GM12878 (cell line): ENCODE measurements at regions of chr12 and their contacts with region 1.

Region 1: GRCh38 chr12:104381731-104382480 is 74.8 kb upstream of the CHST11 start:
- DNase-seq: peak; percentile 44
- ATAC-seq: peak; percentile 98
- H3K4me3 ChIP-seq: no peak overlapping the region
- H3K27ac ChIP-seq: no peak overlapping the region
- H3K4me1 ChIP-seq: no peaks in the 10 kb centered on the region
- H3K27me3 ChIP-seq: no peaks in the 10 kb centered on the region
- CTCF ChIP-seq: peak; percentile 91 to 92 (median 91); a peak in 5 of 6 replicates
- EP300 ChIP-seq: no peak
- POLR2A ChIP-seq: no peak
- RAD21 ChIP-seq: peak; percentile 100

Region 2: GRCh38 chr12:102903337-102904007 is 1478.4 kb before region 1 on chr12:
- CTCF ChIA-PET with region 1: no interaction called
- POLR2A ChIA-PET with region 1: no interaction called
- RAD21 ChIA-PET with region 1: no interaction called
- SMC1A ChIA-PET with region 1: no interaction called
- in situ Hi-C with region 1: no loop called
- intact Hi-C with region 1: no loop called
- DNase-seq: no peak
- ATAC-seq: peak; percentile 53
- H3K4me3 ChIP-seq: no peak overlapping the region
- H3K27ac ChIP-seq: no peak overlapping the region
- H3K4me1 ChIP-seq: no peaks in the 10 kb centered on the region
- H3K27me3 ChIP-seq: no peaks in the 10 kb centered on the region
- CTCF ChIP-seq: no peak
- EP300 ChIP-seq: no peak
- POLR2A ChIP-seq: no peak
- RAD21 ChIP-seq: no peak

Region 3: GRCh38 chr12:104243551-104243950 is 138.4 kb before region 1 on chr12:
- CTCF ChIA-PET with region 1: no interaction called
- POLR2A ChIA-PET with region 1: no interaction called
- RAD21 ChIA-PET with region 1: no interaction called
- SMC1A ChIA-PET with region 1: no interaction called
- in situ Hi-C with region 1: no loop called
- intact Hi-C with region 1: no loop called
- DNase-seq: no peak
- ATAC-seq: no peak
- H3K4me3 ChIP-seq: no peak overlapping the region
- H3K27ac ChIP-seq: no peak overlapping the region
- H3K4me1 ChIP-seq: no peaks in the 10 kb centered on the region
- H3K27me3 ChIP-seq: no peaks in the 10 kb centered on the region
- CTCF ChIP-seq: no peak
- EP300 ChIP-seq: no peak
- POLR2A ChIP-seq: no peak
- RAD21 ChIP-seq: no peak

Region 4: GRCh38 chr12:104347374-104348075 is 34.4 kb before region 1 on chr12:
- CTCF ChIA-PET with region 1: no interaction called
- POLR2A ChIA-PET with region 1: no interaction called
- RAD21 ChIA-PET with region 1: no interaction called
- SMC1A ChIA-PET with region 1: no interaction called
- in situ Hi-C with region 1: no loop called
- intact Hi-C with region 1: no loop called
- DNase-seq: no peak
- ATAC-seq: no peak
- H3K4me3 ChIP-seq: no peak overlapping the region
- H3K27ac ChIP-seq: no peak overlapping the region
- H3K4me1 ChIP-seq: peaks cover 9% of the 10 kb centered on the region
- H3K27me3 ChIP-seq: no peaks in the 10 kb centered on the region
- CTCF ChIP-seq: no peak
- EP300 ChIP-seq: no peak
- POLR2A ChIP-seq: no peak
- RAD21 ChIP-seq: no peak

Region 5: GRCh38 chr12:104456417-104456949 is 74.6 kb after region 1 on chr12 and contains the start of gene CHST11:
- CTCF ChIA-PET with region 1: interaction called, 13 read pairs
- POLR2A ChIA-PET with region 1: no interaction called
- RAD21 ChIA-PET with region 1: interaction called, 32 read pairs
- SMC1A ChIA-PET with region 1: interaction called, 19 read pairs
- in situ Hi-C with region 1: no loop called
- intact Hi-C with region 1: loop called (anchors 2 kb)
- DNase-seq: no peak
- ATAC-seq: peak; percentile 76
- H3K4me3 ChIP-seq: peak within 1 kb of the TSS; percentile 100
- H3K27ac ChIP-seq: peak within 1 kb of the TSS; percentile 95
- H3K4me1 ChIP-seq: peaks cover 7% of the 10 kb centered on the region; the same call in 1 of the 2 replicates
- H3K27me3 ChIP-seq: no peaks in the 10 kb centered on the region
- CTCF ChIP-seq: peak; percentile 11 to 21 (median 15); a peak in 2 of 6 replicates
- EP300 ChIP-seq: peak; percentile 38 to 57; a peak in 1 of 4 replicates
- POLR2A ChIP-seq: no peak
- RAD21 ChIP-seq: peak; percentile 20; the same call in 1 of the 2 replicates
- polyA plus RNA-seq, gene CHST11: 1.9 to 2.5 TPM

Region 6: DNA sequence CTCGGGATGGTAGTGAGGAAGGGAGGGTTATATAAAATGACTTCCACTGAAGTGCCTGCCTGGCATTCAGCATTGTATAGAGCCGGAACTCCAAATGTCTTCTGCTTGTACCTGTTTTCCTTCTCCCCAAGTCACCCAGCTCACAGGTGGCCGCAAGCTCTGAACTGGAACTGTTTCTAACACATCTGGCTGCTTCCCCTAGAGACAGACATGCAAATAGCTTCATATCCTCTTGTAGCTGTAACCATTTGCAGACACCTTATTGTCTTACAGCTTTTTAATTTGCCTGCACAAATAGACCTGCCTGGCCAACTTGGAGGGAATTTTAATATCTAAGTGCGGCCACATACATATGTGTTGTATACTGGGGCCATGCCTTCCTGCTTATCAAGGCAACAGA is 200.8 kb after region 1 on chr12:
- CTCF ChIA-PET with region 1: interaction called, 7 read pairs
- POLR2A ChIA-PET with region 1: no interaction called
- RAD21 ChIA-PET with region 1: interaction called, 14 read pairs
- SMC1A ChIA-PET with region 1: interaction called, 10 read pairs
- in situ Hi-C with region 1: no loop called
- intact Hi-C with region 1: loop called (anchors 5 kb)
- DNase-seq: peak; percentile 76
- ATAC-seq: peak; percentile 90
- H3K4me3 ChIP-seq: peak overlapping the region; percentile 37; the same call in 1 of the 2 replicates
- H3K27ac ChIP-seq: peak overlapping the region; percentile 47
- H3K4me1 ChIP-seq: peaks cover 69% of the 10 kb centered on the region
- H3K27me3 ChIP-seq: no peaks in the 10 kb centered on the region
- CTCF ChIP-seq: no peak
- EP300 ChIP-seq: peak; percentile 35 to 79; a peak in 3 of 4 replicates
- POLR2A ChIP-seq: no peak
- RAD21 ChIP-seq: no peak

Region 7: GRCh38 chr12:104695453-104696148 is 313.7 kb after region 1 on chr12:
- CTCF ChIA-PET with region 1: interaction called, 7 read pairs
- POLR2A ChIA-PET with region 1: no interaction called
- RAD21 ChIA-PET with region 1: interaction called, 9 read pairs
- SMC1A ChIA-PET with region 1: interaction called, 12 read pairs
- in situ Hi-C with region 1: no loop called
- intact Hi-C with region 1: no loop called
- DNase-seq: peak; percentile 73
- ATAC-seq: peak; percentile 75
- H3K4me3 ChIP-seq: no peak overlapping the region
- H3K27ac ChIP-seq: peak overlapping the region; percentile 58
- H3K4me1 ChIP-seq: peaks cover 42% of the 10 kb centered on the region
- H3K27me3 ChIP-seq: no peaks in the 10 kb centered on the region
- CTCF ChIP-seq: no peak
- EP300 ChIP-seq: peak; percentile 76 to 78; a peak in 3 of 4 replicates
- POLR2A ChIP-seq: no peak
- RAD21 ChIP-seq: no peak

Region 8: GRCh38 chr12:104823985-104824461 is 442.1 kb after region 1 on chr12:
- CTCF ChIA-PET with region 1: interaction called, 7 read pairs
- POLR2A ChIA-PET with region 1: no interaction called
- RAD21 ChIA-PET with region 1: interaction called, 9 read pairs
- SMC1A ChIA-PET with region 1: interaction called, 14 read pairs
- in situ Hi-C with region 1: no loop called
- intact Hi-C with region 1: no loop called
- DNase-seq: no peak
- ATAC-seq: no peak
- H3K4me3 ChIP-seq: no peak overlapping the region
- H3K27ac ChIP-seq: no peak overlapping the region
- H3K4me1 ChIP-seq: no peaks in the 10 kb centered on the region
- H3K27me3 ChIP-seq: no peaks in the 10 kb centered on the region
- CTCF ChIP-seq: no peak
- EP300 ChIP-seq: no peak
- POLR2A ChIP-seq: no peak
- RAD21 ChIP-seq: no peak

Region 9: DNA sequence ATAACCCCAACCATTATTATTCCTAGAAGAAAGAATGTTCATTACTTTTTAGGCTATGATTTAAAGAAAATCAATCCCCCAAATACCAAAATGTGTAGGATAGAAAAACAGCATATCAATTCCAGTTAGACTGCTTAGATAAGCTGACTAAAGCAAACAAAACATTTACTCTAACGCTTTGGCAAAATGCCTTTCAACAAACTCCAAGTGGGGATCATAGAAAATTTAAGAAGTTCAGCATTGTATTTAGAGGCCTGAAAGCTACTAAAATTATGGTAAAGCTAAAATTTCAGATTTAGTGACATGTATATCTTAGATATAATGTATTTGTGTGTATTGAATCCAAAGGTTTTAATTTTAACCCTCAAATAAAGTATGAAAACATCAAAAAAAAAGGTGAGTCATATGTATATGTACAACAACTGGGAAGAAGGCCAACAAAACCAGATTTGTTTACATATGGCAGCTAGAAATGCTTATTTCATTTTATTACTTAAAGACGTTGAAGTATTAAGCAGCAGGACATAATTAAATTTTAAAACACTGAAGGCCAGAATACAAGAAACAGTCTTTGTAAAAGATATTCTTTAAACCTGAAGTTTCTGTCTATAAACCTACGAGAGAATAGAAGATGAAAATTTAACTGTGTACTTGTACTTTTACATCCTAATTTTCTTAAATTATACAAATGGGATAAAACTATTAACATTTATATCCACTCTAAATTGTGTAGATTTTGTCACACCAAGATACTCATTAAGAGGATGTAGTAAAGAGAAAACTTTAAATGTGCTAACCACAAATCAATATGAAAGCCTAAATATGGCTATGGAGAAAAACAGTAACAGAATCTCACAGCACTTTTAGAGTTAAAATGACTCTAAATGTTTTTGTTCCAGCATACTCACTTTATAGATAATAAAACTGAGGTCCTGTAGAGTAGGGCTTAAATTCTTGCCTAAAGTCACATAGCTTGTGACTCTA is 504.8 kb after region 1 on chr12:
- CTCF ChIA-PET with region 1: interaction called, 3 read pairs
- POLR2A ChIA-PET with region 1: no interaction called
- RAD21 ChIA-PET with region 1: interaction called, 10 read pairs
- SMC1A ChIA-PET with region 1: interaction called, 5 read pairs
- in situ Hi-C with region 1: no loop called
- intact Hi-C with region 1: no loop called
- DNase-seq: no peak
- ATAC-seq: no peak
- H3K4me3 ChIP-seq: no peak overlapping the region
- H3K27ac ChIP-seq: no peak overlapping the region
- H3K4me1 ChIP-seq: peaks cover 3% of the 10 kb centered on the region; the same call in 1 of the 2 replicates
- H3K27me3 ChIP-seq: no peaks in the 10 kb centered on the region
- CTCF ChIP-seq: no peak
- EP300 ChIP-seq: no peak
- POLR2A ChIP-seq: no peak
- RAD21 ChIP-seq: no peak